Gastrocnemius medialis (tissue), 4 donors: ENCODE measurements at regions of chr20 and their contacts with region 1.

Region 1: GRCh38 chr20:18566892-18567742 is at the start of gene SMIM26:
- DNase-seq: peak; percentile 88
- ATAC-seq: peak; percentile 97 to 99
- H3K4me3 ChIP-seq: peak within 1 kb of the TSS; percentile 61 to 85 (median 78)
- H3K27ac ChIP-seq: peak within 1 kb of the TSS; percentile 82 to 90 (median 86)
- H3K4me1 ChIP-seq: peaks cover 13 to 20% of the 10 kb centered on the region in 2 donors
- H3K27me3 ChIP-seq: no peaks in the 10 kb centered on the region
- CTCF ChIP-seq: no peak
- POLR2A ChIP-seq: peak in 1 of 2 donors; percentile 45
- total RNA-seq, gene SMIM26: 203 to 374 (median 286) TPM

Region 2: DNA sequence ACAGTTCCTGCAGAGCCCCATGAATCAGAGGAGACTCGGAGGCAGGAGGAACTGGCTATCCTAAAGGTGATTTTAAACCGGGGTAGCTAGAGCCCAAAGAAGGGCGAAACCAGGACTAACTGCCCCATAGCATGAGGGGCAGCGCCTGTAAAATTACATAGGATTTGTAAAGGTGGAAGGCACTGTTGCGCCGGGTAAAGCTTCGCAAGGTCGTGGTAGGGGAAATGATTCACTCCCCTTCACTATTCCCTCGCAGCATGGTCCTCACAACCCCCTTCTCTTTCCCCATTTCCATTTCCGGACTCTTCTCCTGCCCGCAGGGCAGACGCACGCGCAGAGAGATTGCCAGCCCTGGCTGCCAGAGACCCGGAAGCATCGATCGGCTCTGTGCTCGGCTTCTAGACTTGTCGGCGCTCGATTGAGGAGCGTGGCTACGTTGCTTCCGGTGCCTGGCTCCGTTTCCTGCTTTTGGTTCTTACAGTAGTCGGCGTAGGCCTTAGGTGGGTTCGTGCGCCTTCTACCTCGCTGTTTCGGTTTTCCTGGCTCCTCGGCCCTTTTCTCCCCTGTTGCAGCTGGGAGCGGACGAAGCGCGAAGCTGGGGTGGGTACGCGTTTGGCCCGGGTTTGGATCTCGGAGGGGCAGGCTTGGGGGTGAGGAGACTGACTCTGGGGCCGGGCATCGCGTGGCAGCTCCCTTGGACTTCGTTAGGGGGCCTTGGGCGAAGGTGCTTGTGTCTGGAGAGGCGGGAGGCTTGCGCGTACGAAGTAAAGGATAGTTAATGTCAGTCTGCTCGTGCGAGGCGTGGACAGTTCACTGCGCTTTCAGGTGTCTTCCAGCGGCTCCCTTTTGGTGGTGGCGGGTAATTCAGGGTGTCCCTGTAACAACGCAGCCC is 1837.3 kb before region 1 on chr20 and contains the start of gene SNRPB2:
- in situ Hi-C with region 1: loop called in 1 of 4 experiments (anchors 25 kb)
- intact Hi-C with region 1: no loop called
- DNase-seq: peak; percentile 87 to 91
- ATAC-seq: peak; percentile 100
- H3K4me3 ChIP-seq: peak within 1 kb of the TSS; percentile 80 to 98 (median 96)
- H3K27ac ChIP-seq: peak within 1 kb of the TSS; percentile 76 to 86 (median 82)
- H3K4me1 ChIP-seq: peaks cover 17 to 18% of the 10 kb centered on the region in 2 donors
- H3K27me3 ChIP-seq: peaks cover 0 to 5% (median 0%) of the 10 kb centered on the region in 3 donors
- CTCF ChIP-seq: no peak
- POLR2A ChIP-seq: peak; percentile 49 to 57
- total RNA-seq, gene SNRPB2: 18.6 to 37.5 (median 31.7) TPM

Region 3: GRCh38 chr20:18108326-18108725 is 458.8 kb before region 1 on chr20:
- in situ Hi-C with region 1: no loop called
- intact Hi-C with region 1: no loop called
- DNase-seq: no peak
- ATAC-seq: no peak
- H3K4me3 ChIP-seq: no peak overlapping the region
- H3K27ac ChIP-seq: no peak overlapping the region
- H3K4me1 ChIP-seq: no peaks in the 10 kb centered on the region
- H3K27me3 ChIP-seq: no peaks in the 10 kb centered on the region
- CTCF ChIP-seq: no peak
- POLR2A ChIP-seq: no peak

Region 4: GRCh38 chr20:18466894-18467730 is 100.0 kb before region 1 on chr20 and contains the starts of genes DZANK1 and POLR3F:
- in situ Hi-C with region 1: no loop called
- intact Hi-C with region 1: loop called (anchors 1 kb)
- DNase-seq: peak; percentile 83 to 94
- ATAC-seq: peak; percentile 99 to 100
- H3K4me3 ChIP-seq: peak within 1 kb of the TSS; percentile 75 to 98 (median 91)
- H3K27ac ChIP-seq: peak within 1 kb of the TSS; percentile 77 to 93 (median 85)
- H3K4me1 ChIP-seq: peaks cover 19 to 21% of the 10 kb centered on the region in 2 donors
- H3K27me3 ChIP-seq: no peaks in the 10 kb centered on the region
- CTCF ChIP-seq: no peak
- POLR2A ChIP-seq: peak in 1 of 2 donors; percentile 37
- total RNA-seq, gene DZANK1: 0.18 to 1.0 (median 0.62) TPM
- total RNA-seq, gene POLR3F: 6.0 to 8.7 (median 6.8) TPM

Region 5: DNA sequence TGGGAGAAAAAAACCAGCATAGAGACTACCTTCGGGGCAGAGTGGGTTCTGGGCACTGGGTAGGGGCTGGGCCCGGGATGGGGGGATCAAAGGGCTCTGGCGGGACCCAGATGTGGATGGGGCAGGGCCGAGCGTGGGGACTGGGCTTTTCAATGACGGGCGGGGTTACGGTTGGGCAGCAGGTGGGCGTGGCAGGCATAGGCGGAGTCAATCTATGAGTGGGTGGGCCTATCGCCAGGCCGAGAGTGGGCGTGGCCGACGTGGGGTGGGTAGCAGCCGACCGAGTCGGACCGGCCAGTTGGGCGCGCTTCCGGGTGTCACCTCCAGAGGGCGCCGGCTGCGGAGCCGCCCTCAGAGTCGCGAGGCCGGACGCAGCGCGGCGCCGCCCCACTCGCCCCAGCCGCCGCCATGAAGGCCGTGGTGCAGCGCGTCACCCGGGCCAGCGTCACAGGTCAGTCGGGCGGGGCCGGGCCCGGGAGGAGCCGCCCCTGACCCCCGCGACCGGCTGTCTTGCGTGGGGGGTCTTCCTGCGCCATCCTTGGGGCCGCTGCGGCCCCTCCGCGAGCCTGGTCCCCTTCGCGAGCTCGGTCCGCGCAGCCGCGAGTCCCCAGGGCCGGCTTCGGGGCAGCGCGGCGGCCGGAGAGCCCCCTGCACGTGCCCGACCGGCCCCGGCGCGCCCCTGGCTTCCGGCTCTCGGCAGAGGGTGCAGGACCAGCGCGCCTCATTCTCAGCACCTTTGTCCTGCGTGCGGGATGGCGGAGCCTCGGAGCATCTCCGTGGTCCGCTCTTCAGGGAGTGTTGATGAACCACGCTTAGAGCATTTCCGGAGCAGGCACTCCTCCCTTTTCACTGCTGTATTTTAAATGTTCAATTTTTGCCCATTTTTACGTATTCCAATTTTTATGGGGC is 20.8 kb after region 1 on chr20 and contains the start of gene DTD1:
- in situ Hi-C with region 1: no loop called
- intact Hi-C with region 1: loop called (anchors 2 kb)
- DNase-seq: peak; percentile 84 to 90
- ATAC-seq: peak; percentile 94 to 95
- H3K4me3 ChIP-seq: peak within 1 kb of the TSS; percentile 63 to 83 (median 73)
- H3K27ac ChIP-seq: peak within 1 kb of the TSS; percentile 45 to 76 (median 68)
- H3K4me1 ChIP-seq: peaks cover 8 to 12% of the 10 kb centered on the region in 2 donors
- H3K27me3 ChIP-seq: no peaks in the 10 kb centered on the region
- CTCF ChIP-seq: peak; percentile 47 to 87 (median 72)
- POLR2A ChIP-seq: peak; percentile 44 to 53
- total RNA-seq, gene DTD1: 18.0 to 33.0 (median 26.5) TPM

Region 6: DNA sequence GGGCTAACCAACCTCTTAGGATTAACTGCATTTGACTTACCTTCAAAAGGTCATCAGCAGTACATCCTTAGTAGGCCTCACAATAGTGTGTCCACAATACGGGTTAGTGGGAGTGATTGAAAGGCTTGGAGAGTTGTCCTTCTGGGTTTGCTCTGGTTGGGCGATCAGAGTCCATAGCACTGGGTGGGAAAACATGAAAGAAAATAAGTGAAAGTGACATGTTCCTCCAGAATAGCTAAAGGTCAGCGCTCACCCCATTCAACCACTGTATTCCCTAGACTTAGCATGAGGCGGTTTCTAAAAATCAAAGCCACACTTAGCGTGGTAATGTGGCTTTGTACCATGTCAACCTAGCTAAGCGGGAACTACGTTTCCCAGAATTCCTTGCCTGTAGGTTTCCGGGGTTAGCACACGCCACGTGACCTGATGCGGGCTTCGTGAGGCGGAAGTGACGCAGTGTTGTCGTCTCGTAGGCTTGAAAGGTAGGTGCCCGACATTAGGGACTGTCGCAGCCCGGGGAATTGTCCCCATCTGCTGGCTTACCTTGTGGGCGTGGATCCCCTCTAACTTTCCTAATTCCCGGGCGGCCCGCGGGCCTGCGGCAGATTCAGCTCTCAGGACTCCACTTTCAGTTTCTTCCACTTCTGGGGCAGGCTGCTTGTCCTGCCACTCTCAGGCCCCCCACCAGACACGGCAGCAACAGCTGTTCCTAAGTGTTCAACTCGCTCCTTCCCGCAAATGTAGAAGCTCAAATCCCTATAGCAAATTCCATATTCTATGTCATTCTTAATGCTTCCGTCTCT is 226.7 kb after region 1 on chr20:
- in situ Hi-C with region 1: no loop called
- intact Hi-C with region 1: loop called (anchors 5 kb)
- DNase-seq: peak; percentile 82 to 88
- ATAC-seq: peak; percentile 99 to 100
- H3K4me3 ChIP-seq: peak overlapping the region; percentile 82 to 87 (median 85)
- H3K27ac ChIP-seq: peak overlapping the region; percentile 91 to 96 (median 92)
- H3K4me1 ChIP-seq: peaks cover 17 to 18% of the 10 kb centered on the region in 2 donors
- H3K27me3 ChIP-seq: no peaks in the 10 kb centered on the region
- CTCF ChIP-seq: peak in 1 of 5 experiments; percentile 17
- POLR2A ChIP-seq: peak; percentile 58 to 66